HEK293 (cell line): ENCODE measurements at regions of chr5 and their contacts with region 1.

Region 1: DNA sequence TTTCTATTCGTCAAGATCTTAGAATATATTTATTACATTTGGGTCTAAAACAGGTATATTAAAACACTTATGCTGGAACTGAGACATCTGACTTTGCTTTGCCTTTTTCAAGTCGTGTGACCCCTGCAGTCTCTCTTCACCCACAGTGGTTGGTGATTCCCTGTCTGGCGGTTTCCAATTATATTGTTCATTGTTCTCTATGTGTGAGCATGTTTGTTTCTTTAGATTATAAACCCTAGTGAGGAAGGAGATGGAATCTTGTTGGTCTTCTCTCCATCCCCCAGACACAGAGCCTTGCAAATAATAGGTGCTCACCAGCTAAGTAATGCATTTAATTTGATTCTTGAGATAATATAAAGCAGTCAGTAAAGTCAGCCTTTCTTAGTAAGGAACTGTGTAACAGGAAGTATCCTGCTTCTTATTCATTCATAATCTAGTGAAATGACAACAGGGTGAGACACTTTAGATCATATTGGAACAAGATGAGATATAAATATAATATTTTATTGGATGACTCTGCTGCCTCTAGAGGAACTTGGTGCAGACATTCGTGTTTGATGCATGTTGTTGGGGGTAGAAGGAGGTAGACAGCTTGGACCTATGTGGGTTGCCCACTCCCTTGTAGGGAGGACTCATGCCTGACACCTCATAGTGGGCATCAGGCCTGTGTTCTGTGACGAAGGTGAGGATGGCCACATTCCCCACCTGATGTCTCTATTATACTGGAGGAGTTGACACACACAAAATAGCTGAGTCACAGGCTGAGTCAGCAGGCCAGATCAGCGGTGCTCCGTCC is 88.1 kb downstream of the FGF1 start:
- H3K4me3 ChIP-seq: no peak overlapping the region
- H3K27ac ChIP-seq: no peak overlapping the region
- H3K4me1 ChIP-seq: peaks cover 21% of the 10 kb centered on the region
- CTCF ChIP-seq: no peak

Region 2: DNA sequence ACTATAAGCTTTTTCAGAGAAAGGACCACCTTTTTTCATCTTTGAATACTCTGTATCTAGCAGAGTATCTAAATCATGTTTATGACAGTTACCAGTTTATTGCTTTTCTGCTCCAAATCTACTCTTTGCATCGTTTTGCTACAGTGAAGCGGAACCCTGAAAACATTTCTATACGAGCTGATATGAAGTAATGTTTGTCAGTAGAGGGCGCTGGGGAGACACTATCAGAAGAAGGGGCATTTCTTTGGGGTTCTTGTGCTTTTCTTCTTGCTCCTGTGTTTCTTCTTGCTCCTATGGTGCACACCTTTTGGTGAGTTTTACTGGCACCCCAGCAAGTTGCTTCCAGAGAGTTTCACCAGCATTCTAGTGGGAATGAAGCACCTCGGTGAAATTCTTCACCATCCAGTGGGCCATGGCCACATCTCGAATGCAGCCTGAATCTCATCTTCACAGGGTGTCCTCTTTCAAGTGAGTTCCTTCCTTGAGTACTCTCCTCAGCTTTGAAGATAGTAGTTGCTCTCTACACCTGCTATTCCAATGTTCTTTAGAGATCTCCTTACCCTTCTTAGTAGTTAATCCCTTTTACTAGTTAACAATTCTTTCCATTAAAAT is 10.3 kb before region 1 on chr5:
- CTCF ChIA-PET with region 1: interaction called, 17 read pairs
- POLR2A ChIA-PET with region 1: no interaction called
- H3K4me3 ChIP-seq: no peak overlapping the region
- H3K27ac ChIP-seq: no peak overlapping the region
- H3K4me1 ChIP-seq: no peaks in the 10 kb centered on the region
- CTCF ChIP-seq: no peak